PC-9 (cell line): ENCODE measurements at regions of chrX and their contacts with region 1.

Region 1: GRCh38 chrX:20515841-20516461 is 249.2 kb upstream of the RPS6KA3 start:
- DNase-seq: peak; percentile 8 to 92
- H3K4me3 ChIP-seq: no peak overlapping the region
- H3K27ac ChIP-seq: peak overlapping the region; percentile 94
- H3K4me1 ChIP-seq: peaks cover 38% of the 10 kb centered on the region
- H3K27me3 ChIP-seq: no peaks in the 10 kb centered on the region
- CTCF ChIP-seq: no peak

Region 2: GRCh38 chrX:20141281-20142220 is 374.4 kb before region 1 on chrX and contains the start of gene EIF1AX:
- CTCF ChIA-PET with region 1: no interaction called
- POLR2A ChIA-PET with region 1: no interaction called
- intact Hi-C with region 1: loop called (anchors 5 kb)
- DNase-seq: peak; percentile 90 to 96
- H3K4me3 ChIP-seq: peak within 1 kb of the TSS; percentile 95
- H3K27ac ChIP-seq: peak within 1 kb of the TSS; percentile 61
- H3K4me1 ChIP-seq: peaks cover 13% of the 10 kb centered on the region
- H3K27me3 ChIP-seq: no peaks in the 10 kb centered on the region
- CTCF ChIP-seq: no peak
- total RNA-seq, gene EIF1AX: 77.3 TPM in 2 replicates

Region 3: GRCh38 chrX:20266810-20267606 is 248.9 kb before region 1 on chrX and contains the start of gene RPS6KA3:
- CTCF ChIA-PET with region 1: no interaction called
- POLR2A ChIA-PET with region 1: no interaction called
- intact Hi-C with region 1: loop called (anchors 5 kb)
- DNase-seq: peak; percentile 68 to 89
- H3K4me3 ChIP-seq: peak within 1 kb of the TSS; percentile 61
- H3K27ac ChIP-seq: peak within 1 kb of the TSS; percentile 69
- H3K4me1 ChIP-seq: peaks cover 37% of the 10 kb centered on the region
- H3K27me3 ChIP-seq: no peaks in the 10 kb centered on the region
- CTCF ChIP-seq: no peak
- total RNA-seq, gene RPS6KA3: 45.3 and 51.4 TPM in 2 replicates

Region 4: DNA sequence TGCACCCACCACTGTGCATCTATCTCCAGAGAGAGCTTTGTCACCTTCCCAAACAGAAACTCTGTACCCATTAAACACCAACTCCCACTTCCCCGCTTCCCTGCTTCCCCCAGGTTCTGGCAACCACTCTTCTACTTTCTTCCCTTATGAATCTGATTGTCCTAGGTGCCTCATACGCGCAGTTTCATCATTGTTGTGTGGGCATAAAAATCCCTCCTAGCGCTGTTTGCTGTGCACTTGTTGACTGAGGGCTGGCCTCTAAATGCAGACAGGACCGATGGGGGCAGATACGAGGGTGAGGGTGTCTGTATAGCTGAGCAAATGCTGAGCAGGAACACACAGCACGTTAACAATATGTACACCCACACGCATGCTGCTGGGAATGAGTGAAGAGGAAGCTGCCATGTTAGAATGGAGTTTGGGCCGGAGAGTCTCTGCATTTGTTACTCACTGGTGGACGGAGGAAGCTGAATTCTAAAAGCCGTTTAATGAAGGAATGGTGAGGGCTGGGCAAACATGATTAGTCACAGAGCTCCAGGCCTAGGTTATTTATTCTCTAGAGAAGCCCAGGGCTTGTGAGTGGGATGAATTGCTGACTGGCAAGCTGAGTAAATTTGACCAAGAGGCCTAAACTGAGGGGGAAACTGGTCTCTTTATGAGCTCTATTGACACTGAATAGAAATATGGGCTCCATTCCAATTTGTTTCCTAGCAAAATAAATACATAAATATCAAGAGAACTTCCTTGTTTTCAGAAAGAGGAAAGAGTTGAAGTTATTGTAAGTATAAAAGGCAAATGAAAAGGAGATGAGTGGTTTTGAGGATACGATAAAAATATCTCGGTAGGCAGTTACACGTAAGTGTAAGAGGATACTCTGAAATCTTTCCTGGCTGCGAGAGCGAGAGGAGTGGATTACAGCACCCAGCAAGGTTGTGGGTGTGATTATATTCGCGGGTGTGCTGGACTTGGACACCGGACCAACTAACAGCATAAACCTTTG is 153.4 kb before region 1 on chrX:
- CTCF ChIA-PET with region 1: interaction called, 3 read pairs
- POLR2A ChIA-PET with region 1: no interaction called
- intact Hi-C with region 1: loop called (anchors 1 kb)
- DNase-seq: peak; percentile 30 to 94
- H3K4me3 ChIP-seq: peak overlapping the region; percentile 51
- H3K27ac ChIP-seq: peak overlapping the region; percentile 99
- H3K4me1 ChIP-seq: peaks cover 50% of the 10 kb centered on the region
- H3K27me3 ChIP-seq: no peaks in the 10 kb centered on the region
- CTCF ChIP-seq: no peak

Region 5: GRCh38 chrX:20729416-20729815 is 213.5 kb after region 1 on chrX:
- CTCF ChIA-PET with region 1: interaction called, 15 read pairs
- POLR2A ChIA-PET with region 1: no interaction called
- intact Hi-C with region 1: no loop called
- DNase-seq: no peak
- H3K4me3 ChIP-seq: no peak overlapping the region
- H3K27ac ChIP-seq: no peak overlapping the region
- H3K4me1 ChIP-seq: no peaks in the 10 kb centered on the region
- H3K27me3 ChIP-seq: no peaks in the 10 kb centered on the region
- CTCF ChIP-seq: no peak

Region 6: GRCh38 chrX:21972721-21973120 is 1456.8 kb after region 1 on chrX:
- CTCF ChIA-PET with region 1: no interaction called
- POLR2A ChIA-PET with region 1: no interaction called
- intact Hi-C with region 1: loop called (anchors 5 kb)
- DNase-seq: peak in 1 of 2 experiments; percentile 69
- H3K4me3 ChIP-seq: no peak overlapping the region
- H3K27ac ChIP-seq: peak overlapping the region; percentile 74
- H3K4me1 ChIP-seq: peaks cover 24% of the 10 kb centered on the region
- H3K27me3 ChIP-seq: no peaks in the 10 kb centered on the region
- CTCF ChIP-seq: no peak